ENCODE measurements at regions of chr1 and their contacts with region 1.

Region 1: GRCh38 chr1:212782422-212783154 is 9.0 kb downstream of the NSL1 start:
- DNase-seq: no peak
- ATAC-seq: peak; percentile 68
- H3K4me3 Mint-ChIP-seq: no peak overlapping the region
- H3K27ac Mint-ChIP-seq: no peak overlapping the region
- H3K4me1 Mint-ChIP-seq: peaks cover 23% of the 10 kb centered on the region
- H3K27me3 Mint-ChIP-seq: no peaks in the 10 kb centered on the region
- CTCF ChIP-seq: peak; percentile 86

Region 2: GRCh38 chr1:212608956-212609700 is 173.5 kb before region 1 on chr1:
- CTCF ChIA-PET with region 1: no interaction called
- POLR2A ChIA-PET with region 1: no interaction called
- intact Hi-C with region 1: no loop called
- DNase-seq: peak; percentile 54
- ATAC-seq: peak; percentile 5
- H3K4me3 Mint-ChIP-seq: peak overlapping the region; percentile 90
- H3K27ac Mint-ChIP-seq: peak overlapping the region; percentile 93
- H3K4me1 Mint-ChIP-seq: peaks cover 56% of the 10 kb centered on the region
- H3K27me3 Mint-ChIP-seq: peaks cover 38% of the 10 kb centered on the region
- CTCF ChIP-seq: peak; percentile 62

Region 3: DNA sequence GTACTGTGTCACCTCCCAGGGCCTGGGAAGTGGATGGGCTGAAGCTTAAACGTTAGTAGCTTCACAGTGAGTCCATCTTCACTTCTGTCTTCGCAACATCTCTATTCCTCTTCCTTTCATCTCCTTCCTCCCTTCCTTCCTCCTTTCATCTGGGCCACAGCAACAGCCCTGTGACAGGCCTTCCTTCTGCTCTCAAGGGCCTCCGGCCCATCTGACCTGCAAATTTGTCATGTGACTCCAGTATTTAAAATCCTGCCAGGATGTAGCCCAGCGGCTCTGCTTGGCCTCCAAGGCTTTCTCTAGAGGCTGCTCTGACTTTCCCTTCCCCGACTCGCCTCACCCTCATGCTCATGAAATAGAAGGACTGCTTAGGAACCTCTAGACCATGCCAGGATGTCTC is 72.0 kb before region 1 on chr1:
- CTCF ChIA-PET with region 1: no interaction called
- POLR2A ChIA-PET with region 1: no interaction called
- intact Hi-C with region 1: no loop called
- DNase-seq: no peak
- ATAC-seq: no peak
- H3K4me3 Mint-ChIP-seq: no peak overlapping the region
- H3K27ac Mint-ChIP-seq: no peak overlapping the region
- H3K4me1 Mint-ChIP-seq: peaks cover 21% of the 10 kb centered on the region
- H3K27me3 Mint-ChIP-seq: peaks cover under 1% of the 10 kb centered on the region
- CTCF ChIP-seq: no peak

Region 4: GRCh38 chr1:212760126-212760823 is 22.3 kb before region 1 on chr1:
- CTCF ChIA-PET with region 1: interaction called, 12 read pairs
- POLR2A ChIA-PET with region 1: no interaction called
- intact Hi-C with region 1: no loop called
- DNase-seq: peak; percentile 76
- ATAC-seq: peak; percentile 96
- H3K4me3 Mint-ChIP-seq: no peak overlapping the region
- H3K27ac Mint-ChIP-seq: no peak overlapping the region
- H3K4me1 Mint-ChIP-seq: peaks cover 17% of the 10 kb centered on the region
- H3K27me3 Mint-ChIP-seq: no peaks in the 10 kb centered on the region
- CTCF ChIP-seq: peak; percentile 62

Region 5: GRCh38 chr1:212769459-212770167 is 13.0 kb before region 1 on chr1:
- CTCF ChIA-PET with region 1: interaction called, 17 read pairs
- POLR2A ChIA-PET with region 1: no interaction called
- intact Hi-C with region 1: no loop called
- DNase-seq: no peak
- ATAC-seq: peak; percentile 91
- H3K4me3 Mint-ChIP-seq: peak overlapping the region; percentile 8
- H3K27ac Mint-ChIP-seq: peak overlapping the region; percentile 68
- H3K4me1 Mint-ChIP-seq: peaks cover 68% of the 10 kb centered on the region
- H3K27me3 Mint-ChIP-seq: no peaks in the 10 kb centered on the region
- CTCF ChIP-seq: no peak

Region 6: GRCh38 chr1:212928323-212929291 is 146.0 kb after region 1 on chr1:
- CTCF ChIA-PET with region 1: no interaction called
- POLR2A ChIA-PET with region 1: no interaction called
- intact Hi-C with region 1: no loop called
- DNase-seq: no peak
- ATAC-seq: no peak
- H3K4me3 Mint-ChIP-seq: no peak overlapping the region
- H3K27ac Mint-ChIP-seq: no peak overlapping the region
- H3K4me1 Mint-ChIP-seq: no peaks in the 10 kb centered on the region
- H3K27me3 Mint-ChIP-seq: no peaks in the 10 kb centered on the region
- CTCF ChIP-seq: no peak